Natural killer cell (primary cell): ENCODE measurements at regions of chr3 and their contacts with region 1.

Region 1: DNA sequence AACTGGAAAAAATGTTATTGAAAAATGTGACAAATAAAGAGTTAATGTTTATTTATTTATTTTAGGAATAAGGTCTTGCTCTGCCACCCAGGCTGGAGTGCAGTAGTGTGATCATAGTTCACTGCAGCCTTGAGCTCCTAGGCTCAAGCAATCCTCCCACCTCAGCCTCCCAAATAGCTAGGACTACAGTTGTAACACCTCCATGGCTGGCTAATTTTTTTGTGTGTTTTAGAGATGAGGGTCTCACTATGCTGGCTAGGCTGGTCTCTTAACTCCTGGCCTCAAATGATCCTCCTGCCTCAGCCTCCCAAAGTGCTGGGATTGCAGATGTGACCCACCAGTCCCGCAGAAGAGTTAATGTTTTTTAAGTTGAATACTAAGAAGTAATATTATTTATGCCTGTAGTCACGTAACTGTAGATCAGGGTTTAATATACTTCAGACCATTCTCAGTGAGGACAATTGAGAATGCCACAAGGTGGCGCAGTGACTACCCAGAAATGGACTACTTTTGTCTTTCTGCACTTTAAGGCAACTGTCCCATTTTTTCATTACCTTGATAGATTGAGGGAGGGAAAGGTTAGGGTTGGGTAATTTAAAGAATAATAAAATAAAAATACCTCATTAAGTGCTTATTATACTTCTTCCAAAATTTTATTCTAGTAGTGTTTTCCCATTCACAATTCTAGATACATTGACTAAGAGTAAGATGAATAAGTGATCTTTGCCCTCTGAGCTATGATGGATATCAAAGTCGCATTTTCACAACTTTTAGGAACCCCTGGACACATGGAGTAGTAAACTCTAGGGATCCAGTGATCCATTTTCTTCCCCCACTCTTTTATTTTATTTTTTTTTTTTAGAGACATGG is 6.0 kb downstream of the MUC13 start:
- DNase-seq: peak; percentile 38 to 80
- ATAC-seq: peak in 2 of 3 donors; percentile 60 to 74
- H3K4me3 ChIP-seq: no peak overlapping the region
- H3K4me3 Mint-ChIP-seq: no peak overlapping the region
- H3K27ac ChIP-seq: no peak overlapping the region
- H3K27ac Mint-ChIP-seq: no peak overlapping the region
- H3K4me1 ChIP-seq: no peaks in the 10 kb centered on the region
- H3K4me1 Mint-ChIP-seq: no peaks in the 10 kb centered on the region
- H3K27me3 ChIP-seq: no peaks in the 10 kb centered on the region
- H3K27me3 Mint-ChIP-seq: peaks cover 15 to 17% of the 10 kb centered on the region in 2 donors
- CTCF ChIP-seq: peak; percentile 72

Region 2: DNA sequence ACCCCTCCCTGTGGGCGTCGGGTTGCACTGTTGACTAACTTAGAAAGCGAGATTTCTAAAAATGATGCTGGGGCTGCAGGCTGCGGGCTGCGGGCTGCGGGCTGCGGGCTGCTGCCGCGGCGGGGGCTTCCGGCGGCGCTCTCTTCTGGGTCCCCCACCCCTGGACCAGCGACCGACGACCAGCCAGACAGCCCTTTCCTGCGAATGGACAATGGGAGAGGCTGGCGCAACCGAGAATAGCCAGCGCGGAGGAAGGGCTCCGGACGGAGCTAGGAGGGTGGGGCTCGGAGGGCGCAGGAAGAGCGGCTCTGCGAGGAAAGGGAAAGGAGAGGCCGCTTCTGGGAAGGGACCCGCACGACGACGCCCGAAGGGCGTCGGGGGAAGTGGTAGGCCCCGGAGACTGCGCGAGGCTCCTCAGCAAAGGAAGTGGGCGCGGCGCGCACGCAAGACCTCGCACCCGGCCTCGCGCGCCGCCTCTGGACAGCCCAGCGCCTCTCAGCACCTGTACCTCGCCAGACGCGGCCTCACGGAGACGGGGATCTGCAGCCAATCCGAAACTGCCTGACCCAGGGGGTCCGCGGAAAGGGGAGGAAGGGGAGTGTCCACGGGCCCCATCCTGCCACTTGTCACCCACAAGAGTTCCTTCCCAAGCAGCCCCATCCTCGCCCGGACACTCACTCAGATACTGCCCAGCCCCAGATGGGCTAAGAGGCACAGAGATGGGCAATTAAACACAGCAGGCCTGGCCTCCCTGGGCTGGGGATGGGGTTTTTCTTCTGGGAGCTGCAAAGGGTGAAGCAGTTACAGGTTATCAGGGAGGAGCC is 213.2 kb after region 1 on chr3:
- intact Hi-C with region 1: loop called (anchors 10 kb)
- DNase-seq: peak; percentile 61 to 86
- ATAC-seq: peak; percentile 87 to 91 (median 91)
- H3K4me3 ChIP-seq: peak overlapping the region; percentile 29
- H3K4me3 Mint-ChIP-seq: peak overlapping the region; percentile 86
- H3K27ac ChIP-seq: peak overlapping the region; percentile 59
- H3K27ac Mint-ChIP-seq: peak overlapping the region; percentile 84 to 95
- H3K4me1 ChIP-seq: peaks cover 57% of the 10 kb centered on the region
- H3K4me1 Mint-ChIP-seq: peaks cover 46 to 66% of the 10 kb centered on the region in 2 donors
- H3K27me3 ChIP-seq: no peaks in the 10 kb centered on the region
- H3K27me3 Mint-ChIP-seq: no peaks in the 10 kb centered on the region
- CTCF ChIP-seq: peak; percentile 6

Region 3: DNA sequence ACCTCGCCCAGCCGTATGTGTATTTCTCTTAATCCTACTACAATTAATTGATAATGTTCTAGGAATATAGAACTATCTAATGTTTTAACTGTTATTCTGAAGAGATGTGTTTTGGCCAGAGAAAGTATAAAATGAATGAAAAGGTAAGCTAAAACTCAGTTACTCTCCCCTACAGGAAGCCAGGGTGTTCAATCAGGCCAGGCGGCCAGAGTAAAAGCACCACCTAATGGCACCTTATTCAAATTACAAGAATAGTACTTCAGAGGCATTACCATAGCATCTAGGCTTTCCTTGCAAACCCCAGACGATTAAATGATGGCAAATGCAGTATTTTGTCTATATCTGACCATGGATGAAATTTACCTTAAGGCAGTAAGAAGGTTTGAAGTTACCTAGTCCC is 273.6 kb after region 1 on chr3:
- intact Hi-C with region 1: loop called (anchors 1 kb)
- DNase-seq: peak in 1 of 2 donors; percentile 46
- ATAC-seq: peak in 2 of 3 donors; percentile 69 to 77
- H3K4me3 ChIP-seq: no peak overlapping the region
- H3K4me3 Mint-ChIP-seq: no peak overlapping the region
- H3K27ac ChIP-seq: no peak overlapping the region
- H3K27ac Mint-ChIP-seq: no peak overlapping the region
- H3K4me1 ChIP-seq: no peaks in the 10 kb centered on the region
- H3K4me1 Mint-ChIP-seq: no peaks in the 10 kb centered on the region
- H3K27me3 ChIP-seq: no peaks in the 10 kb centered on the region
- H3K27me3 Mint-ChIP-seq: no peaks in the 10 kb centered on the region
- CTCF ChIP-seq: peak; percentile 16

Region 4: GRCh38 chr3:125528920-125529319 is 600.4 kb after region 1 on chr3:
- intact Hi-C with region 1: no loop called
- DNase-seq: no peak
- ATAC-seq: no peak
- H3K4me3 ChIP-seq: no peak overlapping the region
- H3K4me3 Mint-ChIP-seq: no peak overlapping the region
- H3K27ac ChIP-seq: no peak overlapping the region
- H3K27ac Mint-ChIP-seq: no peak overlapping the region
- H3K4me1 ChIP-seq: no peaks in the 10 kb centered on the region
- H3K4me1 Mint-ChIP-seq: no peaks in the 10 kb centered on the region
- H3K27me3 ChIP-seq: no peaks in the 10 kb centered on the region
- H3K27me3 Mint-ChIP-seq: no peaks in the 10 kb centered on the region
- CTCF ChIP-seq: no peak

Region 5: DNA sequence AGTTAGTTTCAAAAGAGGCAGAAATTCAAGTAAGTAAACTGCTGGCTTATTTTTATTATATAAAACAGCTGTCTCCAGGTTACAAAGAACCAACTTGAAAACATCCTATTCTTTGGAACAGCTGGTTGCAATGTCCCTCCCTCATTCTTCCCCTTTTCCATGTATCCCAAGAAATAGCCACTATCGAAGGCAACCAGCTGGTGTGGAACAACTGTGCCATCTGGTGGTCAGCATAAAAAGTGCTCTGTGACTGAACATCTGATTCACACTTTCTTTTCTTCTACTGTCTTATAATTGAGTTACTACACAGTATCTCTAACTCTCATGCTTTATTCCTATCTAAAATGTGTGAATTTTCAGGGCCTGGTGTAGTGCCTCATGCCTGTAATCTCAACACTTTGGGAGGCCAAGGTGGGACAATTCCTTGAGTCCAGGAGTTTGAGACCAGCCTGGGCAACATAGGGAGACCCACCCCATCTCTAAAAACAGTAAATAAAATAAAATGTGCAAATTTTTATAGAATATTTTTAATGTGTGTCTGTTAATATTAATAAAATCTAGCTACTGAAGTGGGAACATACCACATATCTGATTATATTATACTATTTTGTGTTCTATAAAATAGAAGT is 657.1 kb after region 1 on chr3:
- intact Hi-C with region 1: loop called (anchors 1 kb)
- DNase-seq: peak in 1 of 2 donors; percentile 74
- ATAC-seq: peak; percentile 67 to 70 (median 68)
- H3K4me3 ChIP-seq: no peak overlapping the region
- H3K4me3 Mint-ChIP-seq: peak overlapping the region; percentile 13
- H3K27ac ChIP-seq: no peak overlapping the region
- H3K27ac Mint-ChIP-seq: no peak overlapping the region
- H3K4me1 ChIP-seq: peaks cover 8% of the 10 kb centered on the region
- H3K4me1 Mint-ChIP-seq: peaks cover 14 to 19% of the 10 kb centered on the region in 2 donors
- H3K27me3 ChIP-seq: no peaks in the 10 kb centered on the region
- H3K27me3 Mint-ChIP-seq: no peaks in the 10 kb centered on the region
- CTCF ChIP-seq: peak; percentile 82